Ovary (tissue), 10 donors: ENCODE measurements at regions of chr15 and their contacts with region 1.

Region 1: DNA sequence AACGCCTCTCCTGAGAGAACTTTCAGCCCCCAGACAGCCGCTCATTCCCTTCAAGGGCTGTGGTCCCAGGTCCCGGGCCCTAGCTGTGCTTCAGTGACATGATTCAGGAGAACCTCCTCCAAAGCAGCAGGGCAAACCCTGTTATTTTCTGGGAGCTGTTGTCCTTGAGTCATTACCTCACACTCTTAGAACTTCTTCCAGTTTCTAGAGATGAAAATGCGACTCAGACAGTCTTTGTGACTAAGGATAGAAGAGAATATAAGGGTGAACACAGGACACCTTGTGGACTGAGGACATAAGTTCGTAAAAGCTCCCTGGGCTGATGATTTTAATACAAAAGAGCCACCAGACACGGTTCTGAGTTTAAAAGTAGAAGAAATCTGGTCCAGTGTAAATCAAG is 203.8 kb downstream of the RORA start:
- DNase-seq: no peak
- H3K4me3 ChIP-seq: no peak overlapping the region
- H3K27ac ChIP-seq: no peak overlapping the region
- H3K4me1 ChIP-seq: no peaks in the 10 kb centered on the region
- H3K27me3 ChIP-seq: no peaks in the 10 kb centered on the region
- CTCF ChIP-seq: no peak
- EP300 ChIP-seq: no peak
- POLR2A ChIP-seq: no peak

Region 2: DNA sequence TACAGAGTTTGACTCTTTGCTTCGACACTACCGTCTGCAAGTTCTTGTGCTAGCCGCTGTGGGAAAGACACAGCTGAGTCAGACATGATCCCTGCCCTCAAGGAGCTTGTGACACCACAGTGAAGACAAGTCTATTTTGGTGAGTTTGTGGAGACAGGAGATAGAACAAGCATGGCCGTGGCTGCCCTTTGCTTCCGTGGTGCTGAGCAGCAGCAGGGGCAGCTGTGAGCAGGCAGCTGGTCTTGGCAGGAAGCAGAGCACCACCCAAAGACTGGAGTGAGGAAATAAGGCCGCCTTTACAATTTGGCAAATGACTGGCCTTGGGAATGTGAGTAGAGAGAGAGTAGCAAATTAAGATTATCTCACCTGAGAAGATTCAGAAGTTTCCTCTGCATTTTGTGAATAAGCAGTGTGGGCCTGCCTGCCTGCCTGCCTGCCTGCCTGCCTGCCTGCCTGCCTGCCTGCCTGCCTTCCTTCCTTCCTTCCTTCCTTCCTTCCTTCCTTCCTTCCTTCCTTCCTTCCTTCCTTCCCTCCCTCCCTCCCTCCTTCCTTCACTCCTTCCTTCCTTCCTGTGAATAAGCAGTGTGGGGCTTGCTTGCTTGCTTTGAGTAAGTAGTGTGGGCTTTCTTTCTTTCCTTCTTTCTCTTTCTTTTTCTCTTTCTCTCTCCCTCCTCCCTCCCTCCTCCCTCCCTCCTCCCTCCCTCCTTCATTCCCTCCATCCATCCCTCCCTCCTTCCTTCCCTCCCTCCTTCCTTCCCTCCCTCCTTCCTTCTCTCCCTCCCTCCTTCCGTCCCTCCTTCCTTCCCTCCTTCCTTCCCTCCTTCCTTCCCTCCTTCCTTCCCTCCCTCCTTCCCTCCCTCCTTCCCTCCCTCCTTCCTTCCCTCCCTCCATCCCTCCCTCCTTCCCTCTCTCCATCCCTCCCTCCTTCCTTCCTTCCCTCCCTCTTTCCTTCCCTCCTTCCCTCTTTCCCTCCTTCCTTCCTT is 1415.3 kb before region 1 on chr15:
- intact Hi-C with region 1: loop called in 1 of 4 experiments (anchors 10 kb)
- DNase-seq: no peak
- H3K4me3 ChIP-seq: no peak overlapping the region
- H3K27ac ChIP-seq: no peak overlapping the region
- H3K4me1 ChIP-seq: no peaks in the 10 kb centered on the region
- H3K27me3 ChIP-seq: no peaks in the 10 kb centered on the region
- CTCF ChIP-seq: no peak
- EP300 ChIP-seq: no peak
- POLR2A ChIP-seq: no peak